H1 (cell line): ENCODE measurements at regions of chr12 and their contacts with region 1.

Region 1: GRCh38 chr12:12376646-12377448 is 20.0 kb downstream of the BORCS5 start:
- DNase-seq: no peak
- H3K4me3 ChIP-seq: no peak overlapping the region
- H3K27ac ChIP-seq: no peak overlapping the region
- H3K4me1 ChIP-seq: no peaks in the 10 kb centered on the region
- H3K27me3 ChIP-seq: no peaks in the 10 kb centered on the region
- CTCF ChIP-seq: peak in 2 of 3 experiments; percentile 50 to 60; a peak in 2 of 4 replicates
- EP300 ChIP-seq: no peak
- POLR2A ChIP-seq: no peak
- RAD21 ChIP-seq: peak; percentile 95 to 97

Region 2: DNA sequence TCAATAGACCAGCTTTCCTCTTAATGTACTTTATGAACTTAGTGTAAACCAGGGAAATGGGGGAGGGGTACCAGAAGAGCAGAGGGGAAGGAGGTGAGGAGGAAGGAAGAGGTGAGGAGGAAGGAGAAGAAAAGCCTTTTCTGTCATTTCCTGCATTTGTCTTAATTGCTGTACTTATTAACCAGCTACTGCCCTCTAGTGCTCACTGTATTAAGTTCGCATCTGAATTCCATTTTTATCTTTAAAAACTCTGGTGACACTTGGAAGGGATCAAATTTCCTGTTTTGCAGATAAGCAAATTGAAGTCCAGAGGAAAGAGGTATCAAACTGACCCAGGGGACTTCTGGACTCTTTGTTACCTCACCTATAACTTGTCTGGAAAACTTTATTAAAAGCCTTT is 49.0 kb before region 1 on chr12:
- CTCF ChIA-PET with region 1: no interaction called
- POLR2A ChIA-PET with region 1: no interaction called
- DNase-seq: no peak
- H3K4me3 ChIP-seq: no peak overlapping the region
- H3K27ac ChIP-seq: no peak overlapping the region
- H3K4me1 ChIP-seq: peaks cover 4 to 11% (median 9%) of the 10 kb centered on the region in 4 experiments; a peak in 4 of 7 replicates
- H3K27me3 ChIP-seq: no peaks in the 10 kb centered on the region
- CTCF ChIP-seq: peak in 2 of 3 experiments; percentile 46 to 74; a peak in 2 of 4 replicates
- EP300 ChIP-seq: no peak
- POLR2A ChIP-seq: no peak
- RAD21 ChIP-seq: peak; percentile 79 to 83

Region 3: DNA sequence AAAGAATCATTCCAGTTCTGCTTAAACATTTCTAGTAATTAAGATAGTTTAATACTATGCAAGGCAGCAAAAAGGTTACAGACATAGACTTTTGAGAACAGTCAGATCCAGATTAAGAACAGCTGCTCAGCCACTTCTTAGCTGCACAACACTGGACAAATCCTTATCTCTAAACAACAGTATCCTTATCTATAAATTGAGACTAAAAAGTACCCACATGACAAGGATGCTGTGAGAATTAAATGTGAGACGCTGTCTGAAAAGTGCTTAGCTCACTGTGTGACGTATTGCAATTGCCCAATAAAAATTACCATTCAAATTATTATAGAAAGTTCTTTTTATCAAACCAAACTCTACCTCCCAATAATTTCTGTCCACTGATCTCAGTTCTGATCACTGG is 15.6 kb after region 1 on chr12:
- CTCF ChIA-PET with region 1: interaction called, 11 read pairs
- POLR2A ChIA-PET with region 1: no interaction called
- DNase-seq: no peak
- H3K4me3 ChIP-seq: no peak overlapping the region
- H3K27ac ChIP-seq: no peak overlapping the region
- H3K4me1 ChIP-seq: peaks cover 0 to 2% (median 0%) of the 10 kb centered on the region in 4 experiments; a peak in 2 of 7 replicates
- H3K27me3 ChIP-seq: no peaks in the 10 kb centered on the region
- CTCF ChIP-seq: no peak
- EP300 ChIP-seq: no peak
- POLR2A ChIP-seq: no peak
- RAD21 ChIP-seq: no peak

Region 4: GRCh38 chr12:12505544-12506495 is 129.0 kb after region 1 on chr12:
- CTCF ChIA-PET with region 1: interaction called, 14 read pairs
- POLR2A ChIA-PET with region 1: no interaction called
- DNase-seq: peak in 1 of 2 experiments; percentile 23
- H3K4me3 ChIP-seq: no peak overlapping the region
- H3K27ac ChIP-seq: no peak overlapping the region
- H3K4me1 ChIP-seq: peaks cover 0 to 17% (median 6%) of the 10 kb centered on the region in 4 experiments; a peak in 4 of 7 replicates
- H3K27me3 ChIP-seq: no peaks in the 10 kb centered on the region
- CTCF ChIP-seq: no peak
- EP300 ChIP-seq: no peak
- POLR2A ChIP-seq: no peak
- RAD21 ChIP-seq: no peak

Region 5: GRCh38 chr12:12654691-12655460 is 278.0 kb after region 1 on chr12:
- CTCF ChIA-PET with region 1: interaction called, 24 read pairs
- POLR2A ChIA-PET with region 1: no interaction called
- DNase-seq: no peak
- H3K4me3 ChIP-seq: no peak overlapping the region
- H3K27ac ChIP-seq: no peak overlapping the region
- H3K4me1 ChIP-seq: peaks cover 2 to 9% (median 5%) of the 10 kb centered on the region in 4 experiments
- H3K27me3 ChIP-seq: no peaks in the 10 kb centered on the region
- CTCF ChIP-seq: no peak
- EP300 ChIP-seq: no peak
- POLR2A ChIP-seq: no peak
- RAD21 ChIP-seq: no peak